Lower leg skin (tissue), 4 donors: ENCODE measurements at regions of chrX and their contacts with region 1.

Region 1: DNA sequence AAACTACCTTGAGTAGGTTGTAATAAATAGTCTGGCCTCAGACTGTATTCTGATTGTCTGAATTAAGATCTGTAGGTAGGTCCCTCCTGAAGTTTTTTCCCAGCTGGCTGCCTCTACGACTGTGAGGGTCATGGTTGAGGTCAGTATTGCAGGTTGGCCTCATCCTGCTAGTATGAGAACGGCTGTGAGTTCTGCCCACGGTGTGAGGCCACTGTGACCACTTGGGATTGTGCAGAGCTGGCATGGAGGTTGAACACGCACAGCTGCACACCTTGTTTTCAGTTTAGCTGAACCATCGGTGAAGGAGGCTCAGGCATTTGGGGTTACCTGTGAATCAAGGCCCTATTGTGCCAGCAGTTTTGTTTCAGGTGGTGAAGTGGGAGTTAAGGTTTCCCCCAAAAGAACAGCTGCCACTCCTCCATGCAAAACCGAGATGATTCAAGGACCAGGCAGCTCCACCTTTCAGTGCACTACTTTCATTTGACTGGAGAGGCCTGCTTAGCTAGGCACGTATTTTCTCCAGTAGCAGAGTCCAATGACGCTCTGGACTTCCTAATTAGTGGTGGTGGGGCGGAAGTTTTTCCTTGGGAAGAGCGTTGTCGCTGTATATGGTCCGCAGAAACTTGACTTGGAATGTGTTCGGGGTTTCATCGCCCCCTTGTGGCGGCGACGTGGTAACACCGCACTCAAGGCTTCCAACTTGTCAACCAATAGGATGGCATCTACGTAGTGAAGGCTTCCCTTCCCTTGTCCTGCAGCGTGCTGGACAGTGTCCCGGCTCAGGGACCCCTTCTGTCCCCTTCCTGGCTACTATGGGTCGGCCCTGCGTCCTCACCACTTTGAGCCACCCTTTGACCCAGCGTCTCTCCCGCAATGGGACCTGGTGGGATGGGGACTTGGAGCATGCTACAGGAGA is 13.8 kb downstream of the CMC4 start:
- DNase-seq: peak; percentile 38 to 91
- H3K4me3 ChIP-seq: no peak overlapping the region
- CTCF ChIP-seq: peak in 1 of 3 donors; percentile 26
- POLR2A ChIP-seq: no peak

Region 2: DNA sequence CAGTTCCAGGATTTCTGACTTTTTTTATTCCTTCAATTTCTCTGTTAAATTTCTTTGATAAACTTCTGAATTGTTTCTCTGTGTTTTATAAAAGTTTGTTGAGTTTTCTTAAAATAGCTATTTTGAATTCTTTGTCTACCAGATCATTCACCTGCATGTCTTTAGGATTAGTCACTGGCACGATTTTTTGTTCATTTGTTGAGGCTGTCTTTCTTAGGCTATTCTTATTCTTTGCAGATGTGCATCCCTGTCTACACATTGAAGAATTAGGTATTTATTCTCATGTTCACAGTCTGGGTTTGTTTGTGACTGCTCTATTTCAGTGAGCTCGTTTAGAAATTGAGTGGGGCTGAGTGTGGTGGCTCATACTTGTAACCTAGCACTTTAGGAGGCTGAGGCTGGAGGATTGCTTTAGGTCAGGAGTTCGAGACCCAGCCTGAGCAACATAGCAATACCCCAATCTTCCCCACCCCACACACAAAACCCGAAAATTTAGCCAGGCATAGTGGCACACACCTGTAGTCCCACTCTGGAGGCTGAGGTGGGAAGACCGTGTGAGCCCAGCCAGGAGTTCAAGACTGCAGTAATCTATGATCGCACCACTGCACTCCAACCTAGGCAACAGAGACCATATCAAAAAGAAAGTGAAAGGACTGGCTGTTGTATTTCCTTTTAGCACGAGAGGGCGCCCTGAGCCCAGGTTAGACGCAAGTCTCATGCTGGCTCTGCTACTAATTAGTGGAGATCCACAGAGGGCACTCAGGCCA is 76.6 kb before region 1 on chrX:
- intact Hi-C with region 1: loop called (anchors 5 kb)
- DNase-seq: peak; percentile 67 to 91
- H3K4me3 ChIP-seq: no peak overlapping the region
- CTCF ChIP-seq: no peak
- POLR2A ChIP-seq: no peak

Region 3: GRCh38 chrX:155514225-155514624 is 457.1 kb after region 1 on chrX:
- intact Hi-C with region 1: no loop called
- DNase-seq: no peak
- H3K4me3 ChIP-seq: no peak overlapping the region
- CTCF ChIP-seq: no peak
- POLR2A ChIP-seq: no peak